ENCODE measurements at regions of chr17 and their contacts with region 1.

Region 1: DNA sequence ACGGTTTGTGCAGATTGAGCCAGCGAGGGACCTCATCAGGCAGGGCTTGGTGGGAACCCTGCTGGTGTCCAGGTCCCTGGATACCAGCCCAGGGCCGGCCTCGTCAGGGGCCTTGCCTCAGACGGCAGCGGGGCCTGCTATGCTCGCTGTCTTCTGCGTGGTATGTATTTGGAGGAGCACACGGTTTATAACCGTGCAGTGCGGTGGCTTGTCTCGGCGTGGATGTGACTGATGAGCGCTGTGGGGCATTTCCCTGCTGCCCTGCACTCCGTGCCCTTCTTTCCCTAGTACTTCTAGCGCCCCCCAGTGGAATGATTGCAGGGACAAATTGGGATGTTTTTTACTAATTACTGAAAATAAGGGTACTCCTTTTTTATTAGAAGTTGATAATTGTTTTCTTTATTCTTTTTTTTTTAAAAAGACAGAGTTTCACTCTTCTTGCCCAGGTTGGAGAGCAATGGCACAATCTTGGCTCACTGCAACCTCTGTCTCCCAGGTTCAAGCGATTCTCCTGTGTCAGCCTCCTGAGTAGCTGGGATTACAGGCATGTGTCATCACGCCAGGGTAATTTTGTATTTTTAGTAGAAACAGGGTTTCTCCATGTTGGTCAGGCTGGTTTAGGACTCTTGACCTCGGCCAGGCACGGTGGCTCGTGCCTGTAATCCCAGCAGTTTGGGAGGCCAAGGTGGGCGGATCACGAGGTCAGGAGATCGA is 15.3 kb downstream of the TBCD start:
- DNase-seq: peak; percentile 58 to 71
- H3K4me3 ChIP-seq: no peak overlapping the region
- H3K4me3 Mint-ChIP-seq: no peak overlapping the region
- H3K27ac Mint-ChIP-seq: no peak overlapping the region
- H3K4me1 ChIP-seq: no peaks in the 10 kb centered on the region
- H3K4me1 Mint-ChIP-seq: no peaks in the 10 kb centered on the region
- H3K27me3 ChIP-seq: no peaks in the 10 kb centered on the region
- H3K27me3 Mint-ChIP-seq: no peaks in the 10 kb centered on the region
- CTCF ChIP-seq: peak; percentile 64 to 78

Region 2: DNA sequence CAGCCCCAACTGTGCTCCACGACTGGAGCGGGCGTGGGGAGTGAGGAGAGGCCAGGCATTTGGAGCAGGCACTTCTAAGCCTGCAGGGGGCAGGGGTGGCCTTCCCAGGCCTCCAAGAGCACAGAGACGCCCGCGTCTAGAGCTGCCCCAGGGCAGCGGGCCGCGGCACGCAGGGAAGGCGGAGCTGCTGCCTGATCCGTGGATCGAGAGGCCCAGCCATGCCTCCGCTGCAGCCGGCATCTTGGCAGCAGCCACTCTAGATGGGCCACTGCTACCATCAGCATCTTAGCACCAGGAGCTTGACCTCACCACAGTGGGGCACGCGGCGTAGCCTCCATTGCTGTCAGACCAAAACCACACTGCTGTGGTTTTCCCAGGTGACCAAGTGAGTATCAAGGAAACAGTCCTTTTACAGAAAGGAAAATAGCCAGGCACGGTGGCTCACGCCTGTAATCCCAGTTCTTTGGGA is 98.5 kb before region 1 on chr17:
- CTCF ChIA-PET with region 1: interaction called, 3 read pairs
- POLR2A ChIA-PET with region 1: no interaction called
- intact Hi-C with region 1: loop called (anchors 5 kb)
- DNase-seq: peak; percentile 71 to 73
- H3K4me3 ChIP-seq: no peak overlapping the region
- H3K4me3 Mint-ChIP-seq: peak overlapping the region; percentile 33
- H3K27ac Mint-ChIP-seq: peak overlapping the region; percentile 25
- H3K4me1 ChIP-seq: no peaks in the 10 kb centered on the region
- H3K4me1 Mint-ChIP-seq: peaks cover 7% of the 10 kb centered on the region
- H3K27me3 ChIP-seq: no peaks in the 10 kb centered on the region
- H3K27me3 Mint-ChIP-seq: no peaks in the 10 kb centered on the region
- CTCF ChIP-seq: peak; percentile 52 to 75

Region 3: GRCh38 chr17:82836823-82837357 is 69.7 kb after region 1 on chr17:
- CTCF ChIA-PET with region 1: no interaction called
- POLR2A ChIA-PET with region 1: no interaction called
- intact Hi-C with region 1: no loop called
- DNase-seq: no peak
- H3K4me3 ChIP-seq: no peak overlapping the region
- H3K4me3 Mint-ChIP-seq: no peak overlapping the region
- H3K27ac Mint-ChIP-seq: peak overlapping the region; percentile 6
- H3K4me1 ChIP-seq: peaks cover 12% of the 10 kb centered on the region; the same call in 1 of the 2 replicates
- H3K4me1 Mint-ChIP-seq: peaks cover 12% of the 10 kb centered on the region
- H3K27me3 ChIP-seq: no peaks in the 10 kb centered on the region
- H3K27me3 Mint-ChIP-seq: no peaks in the 10 kb centered on the region
- CTCF ChIP-seq: peak; percentile 12 to 26